ENCODE measurements at regions of chr16 and their contacts with region 1.

Region 1: GRCh38 chr16:17476414-17477270 is 5.9 kb upstream of the XYLT1 start:
- DNase-seq: peak in 1 of 2 experiments; percentile 27
- H3K4me3 ChIP-seq: no peak overlapping the region
- H3K27ac ChIP-seq: no peak overlapping the region
- H3K4me1 ChIP-seq: no peaks in the 10 kb centered on the region
- H3K27me3 ChIP-seq: peaks cover 16% of the 10 kb centered on the region
- CTCF ChIP-seq: peak; percentile 53; the same call in 1 of the 2 replicates

Region 2: GRCh38 chr16:17578921-17579874 is 102.6 kb after region 1 on chr16:
- CTCF ChIA-PET with region 1: interaction called, 4 read pairs
- POLR2A ChIA-PET with region 1: no interaction called
- intact Hi-C with region 1: loop called (anchors 1 kb)
- DNase-seq: peak in 1 of 2 experiments; percentile 61
- H3K4me3 ChIP-seq: no peak overlapping the region
- H3K27ac ChIP-seq: no peak overlapping the region
- H3K4me1 ChIP-seq: no peaks in the 10 kb centered on the region
- H3K27me3 ChIP-seq: no peaks in the 10 kb centered on the region
- CTCF ChIP-seq: peak; percentile 78

Measured in PC-9 (cell line).